ENCODE measurements at regions of chrX and their contacts with region 1.

Region 1: GRCh38 chrX:123210252-123210651 is 26.2 kb downstream of the GRIA3 start:
- DNase-seq: no peak
- ATAC-seq: no peak
- H3K4me3 ChIP-seq: no peak overlapping the region
- H3K27ac ChIP-seq: no peak overlapping the region
- H3K4me1 ChIP-seq: no peaks in the 10 kb centered on the region
- H3K27me3 ChIP-seq: no peaks in the 10 kb centered on the region; the same call in 1 of the 2 replicates
- CTCF ChIP-seq: no peak

Region 2: GRCh38 chrX:122913134-122913533 is 297.1 kb before region 1 on chrX:
- CTCF ChIA-PET with region 1: no interaction called
- POLR2A ChIA-PET with region 1: no interaction called
- in situ Hi-C with region 1: no loop called
- intact Hi-C with region 1: no loop called
- DNase-seq: no peak
- ATAC-seq: no peak
- H3K4me3 ChIP-seq: no peak overlapping the region
- H3K27ac ChIP-seq: no peak overlapping the region
- H3K4me1 ChIP-seq: no peaks in the 10 kb centered on the region
- H3K27me3 ChIP-seq: no peaks in the 10 kb centered on the region
- CTCF ChIP-seq: no peak

Region 3: DNA sequence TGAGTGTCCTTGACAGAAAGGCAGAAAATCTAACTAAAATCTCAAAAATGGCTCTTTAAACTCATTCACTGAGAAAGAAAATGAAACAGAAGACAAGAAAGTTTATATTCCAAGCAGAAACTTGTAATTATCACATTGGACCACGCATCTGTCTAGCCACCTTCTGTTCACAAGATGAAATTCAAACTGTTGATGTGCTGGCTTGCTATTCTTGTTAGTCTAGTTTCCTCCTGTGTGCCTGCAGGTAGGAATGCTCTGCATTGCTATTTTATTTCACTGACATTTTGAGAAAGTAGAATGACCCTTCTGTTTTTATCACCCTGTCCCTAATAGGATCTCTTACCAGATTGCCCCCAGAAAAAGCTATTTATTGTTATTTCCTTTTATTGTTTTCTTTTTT is 247.5 kb before region 1 on chrX:
- CTCF ChIA-PET with region 1: no interaction called
- POLR2A ChIA-PET with region 1: no interaction called
- in situ Hi-C with region 1: no loop called
- intact Hi-C with region 1: no loop called
- DNase-seq: no peak
- ATAC-seq: no peak
- H3K4me3 ChIP-seq: no peak overlapping the region
- H3K27ac ChIP-seq: no peak overlapping the region
- H3K4me1 ChIP-seq: no peaks in the 10 kb centered on the region
- H3K27me3 ChIP-seq: no peaks in the 10 kb centered on the region
- CTCF ChIP-seq: no peak

Region 4: GRCh38 chrX:123140454-123140853 is 69.8 kb before region 1 on chrX:
- CTCF ChIA-PET with region 1: no interaction called
- POLR2A ChIA-PET with region 1: no interaction called
- in situ Hi-C with region 1: no loop called
- intact Hi-C with region 1: no loop called
- DNase-seq: no peak
- ATAC-seq: no peak
- H3K4me3 ChIP-seq: no peak overlapping the region
- H3K27ac ChIP-seq: no peak overlapping the region
- H3K4me1 ChIP-seq: no peaks in the 10 kb centered on the region
- H3K27me3 ChIP-seq: no peaks in the 10 kb centered on the region
- CTCF ChIP-seq: no peak

Region 5: DNA sequence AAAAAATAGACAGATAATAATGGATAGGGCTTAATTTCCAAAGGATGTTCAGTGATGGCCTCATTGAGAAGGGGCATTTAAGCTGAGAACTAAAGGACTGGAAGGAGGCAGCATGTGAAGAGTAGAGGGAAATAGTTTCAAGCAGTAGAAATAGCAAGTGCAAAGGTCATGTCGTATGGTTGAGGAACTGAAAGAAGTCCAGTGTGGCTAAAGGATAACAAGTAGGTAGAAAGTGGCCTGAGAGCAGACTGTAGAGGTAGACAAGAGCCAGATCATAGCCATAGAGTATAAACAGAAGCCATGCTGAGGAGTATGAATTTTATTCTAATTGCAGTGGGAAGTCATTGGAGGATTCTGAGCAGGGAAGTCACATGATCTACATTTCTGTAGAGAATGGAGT is 46.1 kb after region 1 on chrX:
- CTCF ChIA-PET with region 1: interaction called, 11 read pairs
- POLR2A ChIA-PET with region 1: no interaction called
- in situ Hi-C with region 1: no loop called
- intact Hi-C with region 1: no loop called
- DNase-seq: no peak
- ATAC-seq: no peak
- H3K4me3 ChIP-seq: no peak overlapping the region
- H3K27ac ChIP-seq: no peak overlapping the region
- H3K4me1 ChIP-seq: no peaks in the 10 kb centered on the region
- H3K27me3 ChIP-seq: no peaks in the 10 kb centered on the region
- CTCF ChIP-seq: no peak

Region 6: DNA sequence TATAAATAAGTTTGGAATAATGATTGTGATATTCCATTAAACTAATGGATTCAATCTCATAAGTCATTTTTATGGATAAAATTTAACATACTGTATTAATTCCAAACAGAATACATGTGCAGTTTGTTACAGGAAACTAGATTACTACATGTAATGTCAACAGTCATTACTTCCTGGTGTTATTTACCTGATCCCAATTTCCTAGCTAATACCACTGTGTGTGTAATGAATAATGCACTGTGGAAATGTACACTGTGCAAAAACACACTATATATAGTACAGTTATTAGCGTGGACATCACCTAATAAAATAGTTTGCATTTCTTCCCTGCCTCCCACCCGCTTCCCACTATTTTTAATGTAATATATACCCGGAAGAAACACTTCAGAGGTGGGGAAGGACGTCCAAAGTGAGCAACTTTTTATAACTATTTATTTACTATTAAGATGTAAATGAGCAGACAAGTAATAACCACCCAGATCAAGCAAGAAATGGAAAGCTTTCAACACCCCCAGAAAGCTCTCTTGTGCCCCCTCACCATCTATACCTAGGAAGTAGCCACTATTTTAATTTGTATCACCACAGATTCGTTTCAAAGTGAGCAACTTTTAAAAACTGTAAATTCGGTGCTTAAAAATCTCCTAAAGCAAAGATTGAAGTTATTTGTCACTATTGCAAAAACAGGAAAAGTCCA is 303.5 kb after region 1 on chrX:
- CTCF ChIA-PET with region 1: no interaction called
- POLR2A ChIA-PET with region 1: no interaction called
- in situ Hi-C with region 1: no loop called
- intact Hi-C with region 1: no loop called
- DNase-seq: no peak
- ATAC-seq: peak; percentile 17; the same call in 1 of the 2 replicates
- H3K4me3 ChIP-seq: peak overlapping the region; percentile 44 to 65
- H3K27ac ChIP-seq: peak overlapping the region; percentile 52; the same call in 1 of the 2 replicates
- H3K4me1 ChIP-seq: no peaks in the 10 kb centered on the region; the same call in 1 of the 2 replicates
- H3K27me3 ChIP-seq: no peaks in the 10 kb centered on the region
- CTCF ChIP-seq: no peak